ENCODE measurements at regions of chr20 and their contacts with region 1.

Region 1: GRCh38 chr20:43914311-43915210 is at the start of gene TOX2:
- DNase-seq: peak in 4 of 5 donors; percentile 30 to 40 (median 34)
- H3K4me3 ChIP-seq: peak within 1 kb of the TSS; percentile 11 to 62
- H3K4me3 Mint-ChIP-seq: peak within 1 kb of the TSS; percentile 86 to 94 (median 90)
- H3K27ac ChIP-seq: peak within 1 kb of the TSS; percentile 7
- H3K27ac Mint-ChIP-seq: peak within 1 kb of the TSS; percentile 52 to 92 (median 70)
- H3K4me1 ChIP-seq: peaks cover 34% of the 10 kb centered on the region
- H3K4me1 Mint-ChIP-seq: peaks cover 8 to 23% (median 21%) of the 10 kb centered on the region in 4 donors
- H3K27me3 ChIP-seq: peaks cover 16% of the 10 kb centered on the region
- H3K27me3 Mint-ChIP-seq: peaks cover 29 to 31% of the 10 kb centered on the region in 2 donors
- total RNA-seq, gene TOX2: 0.33 to 0.64 TPM

Region 2: DNA sequence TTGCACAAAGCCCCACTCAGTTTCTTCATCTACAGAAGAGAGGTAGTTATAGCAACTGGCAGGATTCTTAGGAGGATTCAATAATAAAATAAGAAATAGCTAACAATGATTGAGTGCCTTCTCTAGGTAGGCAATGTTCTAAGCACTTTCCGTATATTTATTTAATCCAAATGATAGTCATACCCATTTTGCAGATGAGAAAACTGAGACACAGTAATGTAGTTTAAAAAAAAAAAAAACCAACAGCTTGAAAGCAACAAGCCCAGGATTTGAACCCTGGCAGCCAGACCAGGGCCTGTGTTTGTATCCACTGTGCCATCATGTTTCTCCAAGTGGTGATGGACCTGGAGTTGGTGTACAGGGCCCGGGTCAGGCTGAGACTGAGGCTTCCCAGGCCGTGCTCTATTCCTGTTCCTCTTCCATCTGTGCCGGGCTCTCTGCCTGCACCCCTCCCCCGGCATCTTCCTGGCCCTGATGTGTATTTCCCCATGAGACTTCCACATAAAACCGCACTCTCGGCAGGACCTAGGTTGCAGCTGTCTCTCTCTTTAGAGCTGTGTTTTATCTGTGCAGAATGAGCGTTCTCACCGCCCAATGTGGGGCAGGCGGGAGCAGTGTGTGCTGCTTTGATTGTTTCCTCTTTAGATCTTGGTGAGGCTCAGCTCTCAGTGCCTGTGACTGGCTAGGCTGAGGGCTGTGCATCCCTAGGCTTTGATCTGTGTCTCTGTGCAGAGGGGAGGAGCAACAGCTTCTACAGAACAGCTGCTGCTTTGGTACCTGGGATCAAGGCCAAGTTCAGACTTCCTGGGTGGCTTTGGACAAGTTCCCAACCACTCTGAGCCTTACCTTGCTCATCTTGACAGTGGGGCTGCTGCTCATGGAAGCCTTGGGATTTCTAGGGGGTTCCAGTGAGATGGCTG is 49.6 kb after region 1 on chr20:
- CTCF ChIA-PET with region 1: no interaction called
- POLR2A ChIA-PET with region 1: no interaction called
- intact Hi-C with region 1: loop called (anchors 10 kb)
- DNase-seq: peak; percentile 58 to 73 (median 68)
- H3K4me3 ChIP-seq: no peak overlapping the region
- H3K4me3 Mint-ChIP-seq: peak overlapping the region; percentile 7 to 82 (median 67)
- H3K27ac ChIP-seq: no peak overlapping the region
- H3K27ac Mint-ChIP-seq: peak overlapping the region; percentile 16 to 86 (median 67)
- H3K4me1 ChIP-seq: peaks cover 70% of the 10 kb centered on the region
- H3K4me1 Mint-ChIP-seq: peaks cover 28 to 59% (median 37%) of the 10 kb centered on the region in 4 donors
- H3K27me3 ChIP-seq: no peaks in the 10 kb centered on the region
- H3K27me3 Mint-ChIP-seq: peaks cover 0 to 2% of the 10 kb centered on the region in 2 donors